ENCODE measurements at regions of chr12 and their contacts with region 1.

Region 1: GRCh38 chr12:4857472-4858291 is 52.0 kb upstream of the KCNA1 start:
- DNase-seq: peak; percentile 90
- H3K4me3 Mint-ChIP-seq: peak overlapping the region; percentile 26
- H3K27ac Mint-ChIP-seq: no peak overlapping the region
- H3K4me1 Mint-ChIP-seq: peaks cover 8% of the 10 kb centered on the region
- H3K27me3 Mint-ChIP-seq: peaks cover 14% of the 10 kb centered on the region

Region 2: GRCh38 chr12:4745249-4745648 is 112.4 kb before region 1 on chr12:
- CTCF ChIA-PET with region 1: no interaction called
- intact Hi-C with region 1: no loop called
- DNase-seq: no peak
- H3K4me3 Mint-ChIP-seq: no peak overlapping the region
- H3K27ac Mint-ChIP-seq: no peak overlapping the region
- H3K4me1 Mint-ChIP-seq: no peaks in the 10 kb centered on the region
- H3K27me3 Mint-ChIP-seq: peaks cover 5% of the 10 kb centered on the region

Region 3: GRCh38 chr12:4817836-4818235 is 39.8 kb before region 1 on chr12:
- CTCF ChIA-PET with region 1: interaction called, 7 read pairs
- intact Hi-C with region 1: loop called (anchors 2 kb)
- DNase-seq: no peak
- H3K4me3 Mint-ChIP-seq: no peak overlapping the region
- H3K27ac Mint-ChIP-seq: no peak overlapping the region
- H3K4me1 Mint-ChIP-seq: peaks cover 11% of the 10 kb centered on the region
- H3K27me3 Mint-ChIP-seq: no peaks in the 10 kb centered on the region

Region 4: GRCh38 chr12:4909734-4910501 is 52.2 kb after region 1 on chr12 and contains the start of gene KCNA1:
- CTCF ChIA-PET with region 1: interaction called, 7 read pairs
- intact Hi-C with region 1: loop called (anchors 5 kb)
- DNase-seq: peak; percentile 28
- H3K4me3 Mint-ChIP-seq: peak within 1 kb of the TSS; percentile 74
- H3K27ac Mint-ChIP-seq: no peak within 1 kb of the TSS
- H3K4me1 Mint-ChIP-seq: peaks cover 14% of the 10 kb centered on the region
- H3K27me3 Mint-ChIP-seq: peaks cover 45% of the 10 kb centered on the region
- total RNA-seq, gene KCNA1: 0.05 TPM in 1 of 2 experiments, not detected in the other

Region 5: DNA sequence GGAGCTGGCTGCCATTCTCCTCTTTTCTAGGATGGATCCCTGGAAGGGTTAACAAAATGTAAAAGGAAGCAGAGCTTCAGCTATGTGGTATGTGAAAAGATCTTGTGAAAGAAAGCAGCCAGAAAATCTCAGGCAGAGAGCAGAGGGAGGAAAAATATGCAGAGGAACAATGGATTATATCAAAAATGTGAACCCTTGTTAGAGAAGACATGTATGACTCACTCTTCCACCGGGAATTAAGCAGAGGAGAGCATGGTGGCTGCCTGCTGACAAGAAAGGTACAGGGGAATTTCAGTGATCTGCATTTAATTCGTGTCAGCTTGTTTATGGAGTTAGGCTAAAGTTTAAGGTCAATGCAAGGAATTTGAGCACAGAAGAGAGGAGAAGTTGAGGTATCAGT is 98.4 kb after region 1 on chr12:
- CTCF ChIA-PET with region 1: interaction called, 7 read pairs
- intact Hi-C with region 1: loop called (anchors 1 kb)
- DNase-seq: no peak
- H3K4me3 Mint-ChIP-seq: no peak overlapping the region
- H3K27ac Mint-ChIP-seq: no peak overlapping the region
- H3K4me1 Mint-ChIP-seq: no peaks in the 10 kb centered on the region
- H3K27me3 Mint-ChIP-seq: peaks cover 40% of the 10 kb centered on the region

Region 6: DNA sequence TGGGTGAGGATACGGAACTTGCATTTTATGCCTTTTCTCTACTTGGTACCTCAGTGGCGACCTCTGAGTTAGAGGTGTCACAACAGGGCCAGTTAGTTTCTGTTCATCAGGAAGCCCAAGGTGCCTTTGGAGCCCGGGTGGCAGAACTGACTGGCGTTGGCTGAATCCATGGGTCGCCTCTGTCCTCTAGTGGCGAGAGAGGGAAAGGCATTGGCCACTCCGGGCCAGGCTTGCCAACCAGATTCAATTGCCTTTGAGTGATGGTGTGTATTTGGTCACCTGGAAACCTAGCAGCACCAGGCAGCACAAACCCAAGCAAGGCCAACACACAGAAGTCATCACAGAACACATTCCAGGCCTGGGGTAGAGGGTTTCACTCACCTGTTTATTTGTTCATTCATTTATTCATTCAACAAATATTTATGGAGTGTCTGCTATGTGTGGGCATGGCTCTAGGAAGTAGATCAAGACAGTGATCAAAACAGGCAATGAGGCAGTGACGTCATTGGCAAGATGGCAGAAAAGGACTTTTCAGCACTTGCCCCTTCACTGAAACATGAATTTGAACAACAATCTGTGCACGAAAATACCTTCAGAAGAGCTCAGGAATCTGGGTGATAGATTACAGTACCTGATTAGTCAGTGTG is 145.5 kb after region 1 on chr12:
- CTCF ChIA-PET with region 1: interaction called, 5 read pairs
- intact Hi-C with region 1: loop called (anchors 1 kb)
- DNase-seq: peak; percentile 66
- H3K4me3 Mint-ChIP-seq: no peak overlapping the region
- H3K27ac Mint-ChIP-seq: no peak overlapping the region
- H3K4me1 Mint-ChIP-seq: no peaks in the 10 kb centered on the region
- H3K27me3 Mint-ChIP-seq: peaks cover 8% of the 10 kb centered on the region

Region 7: DNA sequence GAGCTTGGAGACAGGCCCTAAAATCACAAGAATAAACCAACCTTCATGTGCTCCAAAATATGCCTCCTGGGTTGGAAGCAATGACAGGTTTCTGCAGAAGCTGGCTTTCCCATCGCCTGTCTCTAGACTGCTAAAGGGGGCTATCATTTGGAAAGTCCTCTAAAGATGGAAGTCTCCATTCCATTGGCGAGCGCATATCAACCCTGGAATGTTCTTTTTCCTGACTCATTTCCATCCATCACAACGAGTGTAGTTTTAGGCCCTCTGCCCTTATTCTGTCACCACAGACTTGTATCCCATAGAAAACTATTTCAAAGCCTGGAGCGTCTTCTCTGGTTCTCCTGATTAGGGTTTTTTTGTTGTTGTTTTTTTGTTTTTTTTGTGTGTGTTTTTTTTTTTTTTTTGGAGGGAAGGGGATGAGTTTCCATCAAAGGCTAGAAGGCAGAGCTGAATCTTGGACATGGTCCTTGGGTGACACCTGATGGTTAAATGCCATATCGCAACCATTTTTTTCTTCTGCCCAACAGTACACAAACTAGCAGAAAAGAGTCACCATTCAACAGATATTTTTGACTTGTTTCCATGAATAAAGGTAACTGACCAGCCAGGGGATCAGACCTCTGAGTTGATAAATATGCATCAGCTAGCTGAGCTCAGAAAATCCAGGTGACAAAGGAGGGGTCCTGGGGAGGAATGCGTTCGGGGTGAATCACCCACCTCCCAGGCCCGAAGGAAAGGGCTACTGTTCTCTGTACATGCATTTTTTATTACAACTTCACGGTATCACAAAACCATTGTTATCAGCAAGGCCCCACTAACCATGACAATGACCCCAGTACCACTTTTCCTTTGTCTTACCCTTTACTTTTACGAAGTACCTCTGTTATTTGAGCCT is 226.5 kb after region 1 on chr12:
- CTCF ChIA-PET with region 1: interaction called, 10 read pairs
- intact Hi-C with region 1: loop called (anchors 1 kb)
- DNase-seq: peak; percentile 47
- H3K4me3 Mint-ChIP-seq: no peak overlapping the region
- H3K27ac Mint-ChIP-seq: no peak overlapping the region
- H3K4me1 Mint-ChIP-seq: no peaks in the 10 kb centered on the region
- H3K27me3 Mint-ChIP-seq: peaks cover 3% of the 10 kb centered on the region

Measured in activated naive CD4-positive, alpha-beta T cell treated with anti-CD3 and anti-CD28 coated beads for 36 hours (primary cell).